Right ventricle myocardium inferior (tissue), 1 donor: ENCODE measurements at regions of chr2 and their contacts with region 1.

Region 1: GRCh38 chr2:74919827-74920226 is 38.6 kb upstream of the POLE4 start:
- DNase-seq: peak; percentile 91
- ATAC-seq: no peak

Region 2: GRCh38 chr2:75064691-75065396 is 145.0 kb after region 1 on chr2:
- intact Hi-C with region 1: loop called (anchors 5 kb)
- DNase-seq: peak; percentile 79
- ATAC-seq: no peak

Region 3: GRCh38 chr2:75079575-75079974 is 159.7 kb after region 1 on chr2:
- intact Hi-C with region 1: no loop called
- DNase-seq: no peak
- ATAC-seq: no peak

Region 4: GRCh38 chr2:75108937-75109482 is 189.2 kb after region 1 on chr2:
- intact Hi-C with region 1: no loop called
- DNase-seq: no peak
- ATAC-seq: no peak

Region 5: DNA sequence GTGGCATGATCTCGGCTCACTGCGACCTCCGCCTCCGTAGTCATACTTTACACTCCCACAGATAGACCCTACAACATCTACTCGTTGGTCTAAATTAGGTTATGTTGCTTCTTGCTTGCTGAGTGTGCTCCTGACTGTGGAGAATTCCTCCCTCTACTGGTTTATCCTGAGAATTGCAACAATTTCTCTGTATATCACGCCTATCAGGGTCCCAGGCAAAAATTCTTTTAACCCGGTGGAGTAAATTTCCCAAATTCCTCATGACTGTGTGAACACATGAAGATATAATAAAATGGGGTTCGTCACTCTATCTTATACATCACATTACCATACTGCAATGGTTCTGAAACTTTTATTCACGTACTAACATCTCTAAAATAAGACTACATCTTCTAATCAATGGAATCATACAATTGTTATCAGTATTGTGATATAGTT is 484.2 kb after region 1 on chr2:
- intact Hi-C with region 1: loop called (anchors 5 kb)
- DNase-seq: no peak
- ATAC-seq: no peak

Region 6: DNA sequence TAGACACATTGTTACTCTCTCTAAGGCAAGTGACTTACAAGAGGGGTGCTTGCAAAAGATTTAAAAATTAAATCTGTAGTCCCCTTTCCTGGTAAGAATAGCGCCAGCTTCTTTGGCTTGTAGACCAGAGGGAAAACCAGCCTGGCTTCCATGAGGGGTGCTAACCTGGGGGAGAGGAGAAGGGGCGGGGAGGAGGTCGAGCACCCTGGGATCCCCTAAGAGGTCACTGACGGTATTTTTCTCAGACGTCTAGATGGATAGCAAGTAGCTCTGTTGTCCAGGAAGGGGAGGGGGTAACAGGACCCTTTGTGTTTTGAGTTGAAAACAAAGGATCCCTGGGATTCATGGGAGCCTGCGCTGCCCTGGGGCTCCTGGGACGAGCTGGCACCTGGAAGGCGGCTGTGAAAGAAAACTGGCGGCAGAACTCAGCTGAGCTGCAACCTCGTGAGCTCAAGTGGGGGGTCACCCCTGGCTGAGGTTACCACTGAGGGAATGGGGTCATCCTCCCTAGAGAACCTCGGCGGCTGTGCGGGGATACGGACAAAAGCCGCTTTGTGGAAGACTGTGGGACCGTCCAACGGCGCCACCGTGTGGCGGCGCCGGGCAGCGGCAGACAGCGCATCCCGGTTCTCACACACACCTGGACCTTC is 689.0 kb after region 1 on chr2:
- intact Hi-C with region 1: loop called (anchors 5 kb)
- DNase-seq: peak; percentile 73
- ATAC-seq: peak; percentile 81